Naive thymus-derived CD4-positive, alpha-beta T cell (primary cell): ENCODE measurements at regions of chr10 and their contacts with region 1.

Region 1: DNA sequence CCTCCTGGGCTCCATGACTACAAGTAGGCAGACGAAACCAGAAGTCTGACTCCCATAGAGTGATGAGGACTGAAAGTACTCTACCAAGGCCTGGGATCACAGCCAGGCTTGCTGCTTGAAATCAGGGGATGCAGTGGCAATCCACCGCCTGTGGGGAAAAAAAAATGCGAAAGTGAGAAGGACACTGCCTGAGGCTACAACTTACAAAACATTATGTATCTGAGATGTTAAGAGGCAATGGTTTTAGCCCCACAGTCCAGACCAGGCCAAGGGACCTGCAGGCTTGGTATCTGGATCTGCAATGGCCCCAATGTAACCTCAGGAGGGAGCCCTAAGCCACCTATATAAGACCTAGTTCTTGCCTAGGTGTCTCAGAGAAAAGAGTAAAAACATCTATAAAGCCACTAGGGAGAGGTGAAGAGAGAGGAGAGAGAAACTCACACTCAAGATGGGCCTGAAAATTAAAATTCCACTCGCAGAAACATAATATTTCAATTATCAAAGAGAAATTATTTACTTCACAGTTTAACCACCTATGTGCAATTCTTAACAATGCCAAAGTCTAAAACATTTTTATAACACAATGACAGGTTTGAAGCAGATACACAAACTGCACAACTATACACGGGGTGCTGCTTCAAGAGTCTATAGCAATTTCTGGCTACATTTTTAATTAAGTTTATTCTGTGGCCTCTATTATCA is 13.9 kb downstream of the DNAJC1 start:
- DNase-seq: peak in 7 of 9 donors; percentile 14 to 52 (median 36)
- ATAC-seq: peak; percentile 89
- H3K4me3 ChIP-seq: no peak overlapping the region
- H3K4me3 Mint-ChIP-seq: no peak overlapping the region
- H3K27ac ChIP-seq: no peak overlapping the region
- H3K27ac Mint-ChIP-seq: peak overlapping the region in 2 of 9 donors; percentile 10 to 47
- H3K4me1 ChIP-seq: no peaks in the 10 kb centered on the region
- H3K4me1 Mint-ChIP-seq: peaks cover 0 to 14% (median 5%) of the 10 kb centered on the region in 7 donors
- H3K27me3 ChIP-seq: no peaks in the 10 kb centered on the region
- H3K27me3 Mint-ChIP-seq: no peaks in the 10 kb centered on the region

Region 2: GRCh38 chr10:21943633-21944265 is 45.9 kb before region 1 on chr10:
- CTCF ChIA-PET with region 1: no interaction called
- POLR2A ChIA-PET with region 1: no interaction called
- intact Hi-C with region 1: no loop called
- DNase-seq: no peak
- ATAC-seq: peak; percentile 22
- H3K4me3 ChIP-seq: no peak overlapping the region
- H3K4me3 Mint-ChIP-seq: no peak overlapping the region
- H3K27ac ChIP-seq: no peak overlapping the region
- H3K27ac Mint-ChIP-seq: no peak overlapping the region
- H3K4me1 ChIP-seq: no peaks in the 10 kb centered on the region
- H3K4me1 Mint-ChIP-seq: peaks cover 5 to 15% (median 12%) of the 10 kb centered on the region in 7 donors
- H3K27me3 ChIP-seq: no peaks in the 10 kb centered on the region
- H3K27me3 Mint-ChIP-seq: no peaks in the 10 kb centered on the region

Region 3: DNA sequence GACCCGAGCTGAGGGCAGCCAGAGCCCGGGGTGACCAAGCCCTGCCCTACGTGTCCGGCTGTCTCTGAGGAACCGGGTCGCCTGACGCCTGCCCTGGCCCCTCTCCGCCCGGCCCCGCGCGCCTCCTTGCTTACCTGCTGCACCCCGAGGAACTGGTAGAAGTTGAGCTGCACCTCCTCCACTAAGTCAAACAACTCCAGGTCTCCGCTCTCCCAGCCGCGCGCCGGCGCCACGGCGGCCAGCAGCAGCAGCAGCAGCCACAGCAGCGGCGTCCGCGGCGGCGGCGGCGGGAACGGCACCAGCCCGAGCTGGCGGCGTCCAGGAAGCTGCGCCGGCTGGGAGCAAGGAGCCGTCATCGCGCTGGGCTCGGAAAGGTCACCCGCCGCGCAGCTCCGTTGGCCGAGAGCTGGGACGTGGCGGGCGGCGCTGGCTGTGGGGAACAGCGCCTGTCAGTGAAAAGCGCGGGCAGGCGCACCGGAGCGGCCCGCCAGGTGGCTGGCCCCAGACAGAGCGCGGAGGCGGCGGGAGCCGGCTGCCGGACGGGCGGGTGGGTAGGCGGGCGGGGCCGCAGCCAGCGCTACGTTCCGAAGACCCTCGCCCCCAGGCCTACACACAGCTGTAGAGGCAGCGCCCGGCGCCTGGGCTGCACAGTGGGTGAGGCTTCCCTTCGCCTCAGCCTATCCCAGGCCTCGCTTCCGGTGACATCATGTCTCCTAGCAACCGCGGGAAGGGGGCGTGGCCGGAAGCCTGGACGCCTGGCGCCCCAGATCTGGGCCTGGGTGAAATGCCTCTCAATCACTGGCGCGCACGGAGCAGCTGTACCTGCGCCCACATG is 13.7 kb after region 1 on chr10 and contains the start of gene DNAJC1:
- CTCF ChIA-PET with region 1: interaction called, 13 read pairs
- POLR2A ChIA-PET with region 1: interaction called, 4 read pairs
- intact Hi-C with region 1: loop called in 1 of 2 experiments (anchors 1 kb)
- DNase-seq: peak; percentile 94 to 99 (median 97)
- ATAC-seq: peak; percentile 97
- H3K4me3 ChIP-seq: peak within 1 kb of the TSS; percentile 87
- H3K4me3 Mint-ChIP-seq: peak within 1 kb of the TSS; percentile 81 to 99 (median 94)
- H3K27ac ChIP-seq: peak within 1 kb of the TSS; percentile 82
- H3K27ac Mint-ChIP-seq: peak within 1 kb of the TSS; percentile 78 to 94 (median 92)
- H3K4me1 ChIP-seq: peaks cover 18 to 19% of the 10 kb centered on the region in 2 donors
- H3K4me1 Mint-ChIP-seq: peaks cover 7 to 42% (median 29%) of the 10 kb centered on the region in 7 donors
- H3K27me3 ChIP-seq: no peaks in the 10 kb centered on the region
- H3K27me3 Mint-ChIP-seq: peaks cover 0 to 15% (median 4%) of the 10 kb centered on the region in 5 donors
- total RNA-seq, gene DNAJC1: 11.0 to 23.9 (median 12.1) TPM

Region 4: GRCh38 chr10:22228943-22229801 is 239.6 kb after region 1 on chr10:
- CTCF ChIA-PET with region 1: interaction called, 3 read pairs
- POLR2A ChIA-PET with region 1: interaction called, 3 read pairs
- intact Hi-C with region 1: loop called in 1 of 2 experiments (anchors 2 kb)
- DNase-seq: peak; percentile 74 to 94 (median 92)
- ATAC-seq: peak; percentile 95
- H3K4me3 ChIP-seq: peak overlapping the region; percentile 85
- H3K4me3 Mint-ChIP-seq: peak overlapping the region; percentile 84 to 99 (median 94)
- H3K27ac ChIP-seq: peak overlapping the region; percentile 70
- H3K27ac Mint-ChIP-seq: peak overlapping the region; percentile 96 to 100 (median 99)
- H3K4me1 ChIP-seq: peaks cover 6 to 8% of the 10 kb centered on the region in 2 donors
- H3K4me1 Mint-ChIP-seq: peaks cover 11 to 27% (median 15%) of the 10 kb centered on the region in 7 donors
- H3K27me3 ChIP-seq: no peaks in the 10 kb centered on the region
- H3K27me3 Mint-ChIP-seq: peaks cover 0 to 20% (median 5%) of the 10 kb centered on the region in 5 donors

Region 5: DNA sequence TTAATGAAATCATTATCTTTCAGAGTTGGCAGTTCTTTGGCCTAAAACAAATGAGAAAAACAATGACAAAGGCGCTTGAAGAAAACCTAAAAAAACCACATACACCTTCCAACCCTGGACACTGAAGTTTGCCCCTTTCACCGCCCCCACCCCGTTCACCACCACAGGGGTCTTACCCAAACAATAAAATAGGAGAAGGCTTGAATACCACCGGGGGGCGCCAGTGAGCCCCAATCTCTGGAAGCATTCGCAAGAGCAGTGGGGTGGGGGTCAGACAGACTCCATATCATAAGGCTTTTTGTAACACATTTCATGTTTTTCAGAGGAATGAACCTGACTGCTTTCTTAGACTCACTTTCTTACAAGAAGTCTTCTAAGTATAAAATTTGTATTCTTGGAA is 561.1 kb after region 1 on chr10:
- CTCF ChIA-PET with region 1: interaction called, 4 read pairs
- POLR2A ChIA-PET with region 1: interaction called, 5 read pairs
- intact Hi-C with region 1: loop called (anchors 1 to 2 kb)
- DNase-seq: peak; percentile 46 to 76 (median 61)
- ATAC-seq: peak; percentile 73
- H3K4me3 ChIP-seq: no peak overlapping the region
- H3K4me3 Mint-ChIP-seq: no peak overlapping the region
- H3K27ac ChIP-seq: no peak overlapping the region
- H3K27ac Mint-ChIP-seq: peak overlapping the region in 7 of 9 donors; percentile 10 to 83 (median 61)
- H3K4me1 ChIP-seq: no peaks in the 10 kb centered on the region
- H3K4me1 Mint-ChIP-seq: peaks cover 0 to 21% (median 13%) of the 10 kb centered on the region in 7 donors
- H3K27me3 ChIP-seq: no peaks in the 10 kb centered on the region
- H3K27me3 Mint-ChIP-seq: no peaks in the 10 kb centered on the region

Region 6: GRCh38 chr10:22988581-22989360 is 999.2 kb after region 1 on chr10:
- CTCF ChIA-PET with region 1: interaction called, 58 read pairs
- POLR2A ChIA-PET with region 1: no interaction called
- intact Hi-C with region 1: loop called (anchors 1 kb)
- DNase-seq: peak; percentile 14 to 83 (median 77)
- ATAC-seq: peak; percentile 94
- H3K4me3 ChIP-seq: no peak overlapping the region
- H3K4me3 Mint-ChIP-seq: peak overlapping the region in 4 of 10 donors; percentile 28 to 35 (median 30)
- H3K27ac ChIP-seq: no peak overlapping the region
- H3K27ac Mint-ChIP-seq: peak overlapping the region in 4 of 9 donors; percentile 17 to 65 (median 54)
- H3K4me1 ChIP-seq: peaks cover 0 to 4% of the 10 kb centered on the region in 2 donors
- H3K4me1 Mint-ChIP-seq: peaks cover 0 to 25% (median 18%) of the 10 kb centered on the region in 7 donors
- H3K27me3 ChIP-seq: no peaks in the 10 kb centered on the region
- H3K27me3 Mint-ChIP-seq: peaks cover 0 to 22% (median under 1%) of the 10 kb centered on the region in 5 donors

Region 7: DNA sequence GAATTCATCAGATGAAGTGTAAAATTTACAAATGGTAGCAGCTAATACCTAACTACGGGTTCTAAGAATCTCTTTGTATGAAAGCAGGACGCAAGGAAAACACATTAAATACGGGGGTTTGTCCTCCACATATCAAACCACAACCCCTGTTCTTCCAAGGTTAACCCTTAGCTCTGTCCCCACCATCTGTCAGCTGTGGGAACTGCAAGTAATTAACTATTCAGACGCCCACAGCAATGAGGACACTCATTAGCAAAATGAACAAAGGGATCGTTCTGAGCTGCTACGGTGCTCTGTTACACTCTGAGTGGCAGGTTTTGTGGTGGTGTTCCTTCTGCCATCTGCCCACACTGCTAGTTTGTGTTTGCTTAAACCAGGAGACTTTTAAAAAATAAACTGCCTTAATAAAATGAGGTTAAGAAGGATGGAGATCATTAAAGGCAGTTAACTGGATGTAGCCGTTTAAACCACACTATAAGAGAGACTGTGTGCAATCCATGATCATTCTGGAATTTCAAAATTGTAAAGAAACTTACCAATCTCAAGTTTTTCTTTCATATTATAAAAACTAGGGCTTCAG is 1303.6 kb after region 1 on chr10:
- CTCF ChIA-PET with region 1: no interaction called
- POLR2A ChIA-PET with region 1: no interaction called
- intact Hi-C with region 1: loop called in 1 of 2 experiments (anchors 2 kb)
- DNase-seq: peak in 5 of 9 donors; percentile 8 to 22 (median 16)
- ATAC-seq: peak; percentile 65
- H3K4me3 ChIP-seq: no peak overlapping the region
- H3K4me3 Mint-ChIP-seq: no peak overlapping the region
- H3K27ac ChIP-seq: no peak overlapping the region
- H3K27ac Mint-ChIP-seq: no peak overlapping the region
- H3K4me1 ChIP-seq: no peaks in the 10 kb centered on the region
- H3K4me1 Mint-ChIP-seq: peaks cover 0 to 2% (median 0%) of the 10 kb centered on the region in 7 donors
- H3K27me3 ChIP-seq: peaks cover 0 to 6% of the 10 kb centered on the region in 2 donors
- H3K27me3 Mint-ChIP-seq: peaks cover 16 to 32% (median 20%) of the 10 kb centered on the region in 5 donors